ENCODE measurements at regions of chr10 and their contacts with region 1.

Region 1: GRCh38 chr10:100518761-100519241 is 860 bp downstream of the SEC31B start:
- DNase-seq: no peak
- ATAC-seq: peak; percentile 78
- H3K4me3 ChIP-seq: no peak overlapping the region
- H3K27ac ChIP-seq: no peak overlapping the region
- H3K4me1 ChIP-seq: no peaks in the 10 kb centered on the region
- H3K27me3 ChIP-seq: no peaks in the 10 kb centered on the region
- CTCF ChIP-seq: peak; percentile 55 to 74 (median 67); a peak in 5 of 6 replicates
- EP300 ChIP-seq: no peak
- POLR2A ChIP-seq: no peak
- RAD21 ChIP-seq: peak; percentile 54

Region 2: GRCh38 chr10:100338434-100339036 is 180.3 kb before region 1 on chr10:
- CTCF ChIA-PET with region 1: interaction called, 42 read pairs
- POLR2A ChIA-PET with region 1: no interaction called
- RAD21 ChIA-PET with region 1: interaction called, 20 read pairs
- SMC1A ChIA-PET with region 1: interaction called, 12 read pairs
- in situ Hi-C with region 1: no loop called
- intact Hi-C with region 1: no loop called
- DNase-seq: no peak
- ATAC-seq: peak; percentile 88
- H3K4me3 ChIP-seq: no peak overlapping the region
- H3K27ac ChIP-seq: no peak overlapping the region
- H3K4me1 ChIP-seq: peaks cover 14% of the 10 kb centered on the region
- H3K27me3 ChIP-seq: no peaks in the 10 kb centered on the region; a peak in 1 of 4 replicates
- CTCF ChIP-seq: peak; percentile 91 to 93 (median 92)
- EP300 ChIP-seq: no peak
- POLR2A ChIP-seq: no peak
- RAD21 ChIP-seq: peak; percentile 93

Region 3: GRCh38 chr10:100433253-100434240 is 85.3 kb before region 1 on chr10:
- CTCF ChIA-PET with region 1: interaction called, 48 read pairs
- POLR2A ChIA-PET with region 1: no interaction called
- RAD21 ChIA-PET with region 1: interaction called, 15 read pairs
- SMC1A ChIA-PET with region 1: interaction called, 15 read pairs
- in situ Hi-C with region 1: no loop called
- intact Hi-C with region 1: no loop called
- DNase-seq: peak; percentile 81
- ATAC-seq: peak; percentile 96
- H3K4me3 ChIP-seq: no peak overlapping the region
- H3K27ac ChIP-seq: no peak overlapping the region
- H3K4me1 ChIP-seq: no peaks in the 10 kb centered on the region
- H3K27me3 ChIP-seq: no peaks in the 10 kb centered on the region
- CTCF ChIP-seq: peak; percentile 96 to 100 (median 100); a peak in 5 of 6 replicates
- EP300 ChIP-seq: no peak
- POLR2A ChIP-seq: no peak
- RAD21 ChIP-seq: peak; percentile 98

Region 4: DNA sequence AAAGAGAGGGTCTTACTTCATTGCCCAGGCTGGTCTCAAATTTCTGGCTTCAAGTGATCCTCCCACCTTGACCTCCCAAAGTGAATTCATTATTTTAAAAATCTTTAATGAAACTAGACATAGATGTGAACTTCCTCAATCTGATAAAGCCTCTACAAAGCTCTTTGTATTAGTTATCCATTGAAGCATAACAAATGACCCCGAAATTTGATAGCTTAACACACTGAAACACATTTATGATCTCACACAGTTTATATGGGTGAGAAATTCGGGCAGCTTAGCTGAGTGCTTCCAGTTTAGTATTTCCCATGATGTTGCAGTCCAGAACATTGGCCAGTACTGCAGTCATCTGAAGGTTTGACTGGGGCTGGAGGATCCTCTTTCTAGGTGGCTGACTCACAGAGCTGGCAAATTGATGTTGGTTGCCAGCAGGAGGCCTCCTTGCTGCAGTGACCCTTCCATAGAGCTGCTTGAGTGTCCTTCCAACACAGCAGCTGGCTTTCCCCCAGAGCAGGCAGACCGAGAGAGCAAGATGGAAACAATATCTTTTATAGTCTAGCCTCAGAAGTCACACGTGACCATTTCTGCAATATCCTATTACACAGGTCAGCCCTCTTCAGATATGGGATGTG is 72.6 kb before region 1 on chr10:
- CTCF ChIA-PET with region 1: interaction called, 11 read pairs
- POLR2A ChIA-PET with region 1: no interaction called
- RAD21 ChIA-PET with region 1: no interaction called
- SMC1A ChIA-PET with region 1: interaction called, 4 read pairs
- in situ Hi-C with region 1: no loop called
- intact Hi-C with region 1: no loop called
- DNase-seq: no peak
- ATAC-seq: no peak
- H3K4me3 ChIP-seq: no peak overlapping the region
- H3K27ac ChIP-seq: no peak overlapping the region
- H3K4me1 ChIP-seq: no peaks in the 10 kb centered on the region
- H3K27me3 ChIP-seq: no peaks in the 10 kb centered on the region
- CTCF ChIP-seq: no peak
- EP300 ChIP-seq: no peak
- POLR2A ChIP-seq: no peak
- RAD21 ChIP-seq: no peak

Region 5: GRCh38 chr10:100496567-100496966 is 22.2 kb before region 1 on chr10:
- CTCF ChIA-PET with region 1: interaction called, 14 read pairs
- POLR2A ChIA-PET with region 1: interaction called, 3 read pairs
- RAD21 ChIA-PET with region 1: no interaction called
- SMC1A ChIA-PET with region 1: interaction called, 4 read pairs
- in situ Hi-C with region 1: no loop called
- intact Hi-C with region 1: no loop called
- DNase-seq: no peak
- ATAC-seq: no peak
- H3K4me3 ChIP-seq: no peak overlapping the region
- H3K27ac ChIP-seq: no peak overlapping the region
- H3K4me1 ChIP-seq: no peaks in the 10 kb centered on the region
- H3K27me3 ChIP-seq: no peaks in the 10 kb centered on the region
- CTCF ChIP-seq: no peak
- EP300 ChIP-seq: no peak
- POLR2A ChIP-seq: no peak
- RAD21 ChIP-seq: no peak

Region 6: GRCh38 chr10:100529475-100530298 is 10.9 kb after region 1 on chr10 and contains the start of gene NDUFB8:
- CTCF ChIA-PET with region 1: interaction called, 37 read pairs
- POLR2A ChIA-PET with region 1: no interaction called
- RAD21 ChIA-PET with region 1: interaction called, 11 read pairs
- SMC1A ChIA-PET with region 1: interaction called, 23 read pairs
- in situ Hi-C with region 1: no loop called
- intact Hi-C with region 1: no loop called
- DNase-seq: peak; percentile 53
- ATAC-seq: peak; percentile 84
- H3K4me3 ChIP-seq: peak within 1 kb of the TSS; percentile 95
- H3K27ac ChIP-seq: peak within 1 kb of the TSS; percentile 91
- H3K4me1 ChIP-seq: peaks cover 3% of the 10 kb centered on the region; the same call in 1 of the 2 replicates
- H3K27me3 ChIP-seq: no peaks in the 10 kb centered on the region
- CTCF ChIP-seq: no peak
- EP300 ChIP-seq: no peak
- POLR2A ChIP-seq: peak; percentile 91
- RAD21 ChIP-seq: no peak
- polyA plus RNA-seq, gene NDUFB8: 475 to 572 TPM